ENCODE measurements at regions of chr3 and their contacts with region 1.

Region 1: DNA sequence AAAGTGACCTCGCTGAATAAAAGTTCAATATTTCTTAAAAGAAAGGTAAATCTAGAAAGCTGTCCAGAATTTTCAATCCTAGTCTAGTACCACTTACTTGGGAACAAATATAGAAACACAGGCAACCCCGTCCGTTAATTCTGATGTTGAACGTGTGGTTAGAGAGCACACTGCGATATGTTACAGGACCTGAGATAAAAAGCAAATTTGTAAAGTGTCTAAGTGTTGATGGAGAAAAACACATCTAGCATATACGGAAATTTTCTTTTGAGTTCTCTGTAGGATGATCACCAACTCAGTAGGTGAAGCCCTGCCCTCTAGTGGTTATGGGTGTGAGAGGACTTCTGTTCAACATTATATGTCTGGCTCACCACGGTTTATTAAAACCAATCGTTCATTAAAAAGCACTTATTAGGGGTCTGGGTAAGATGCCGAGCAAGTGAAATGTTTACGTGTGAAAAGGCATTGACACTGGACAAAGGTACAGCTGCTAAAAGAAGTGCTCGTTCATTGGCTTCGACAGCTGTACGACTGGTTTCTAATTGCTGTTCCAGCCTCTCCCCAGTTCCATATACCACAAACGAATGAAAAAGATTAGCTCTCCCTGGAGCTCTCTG is 1.0 kb upstream of the ATP2C1 start:
- DNase-seq: peak; percentile 80
- ATAC-seq: peak; percentile 74
- H3K4me3 ChIP-seq: peak overlapping the region; percentile 93
- H3K27ac ChIP-seq: peak overlapping the region; percentile 95
- H3K4me1 ChIP-seq: peaks cover 28% of the 10 kb centered on the region
- H3K27me3 ChIP-seq: no peaks in the 10 kb centered on the region
- CTCF ChIP-seq: peak; percentile 91

Region 2: GRCh38 chr3:130528120-130528519 is 364.7 kb before region 1 on chr3:
- CTCF ChIA-PET with region 1: no interaction called
- POLR2A ChIA-PET with region 1: interaction called, 20 read pairs
- in situ Hi-C with region 1: no loop called
- intact Hi-C with region 1: no loop called
- DNase-seq: no peak
- ATAC-seq: no peak
- H3K4me3 ChIP-seq: no peak overlapping the region
- H3K27ac ChIP-seq: no peak overlapping the region
- H3K4me1 ChIP-seq: no peaks in the 10 kb centered on the region
- H3K27me3 ChIP-seq: peaks cover 14% of the 10 kb centered on the region
- CTCF ChIP-seq: no peak

Region 3: DNA sequence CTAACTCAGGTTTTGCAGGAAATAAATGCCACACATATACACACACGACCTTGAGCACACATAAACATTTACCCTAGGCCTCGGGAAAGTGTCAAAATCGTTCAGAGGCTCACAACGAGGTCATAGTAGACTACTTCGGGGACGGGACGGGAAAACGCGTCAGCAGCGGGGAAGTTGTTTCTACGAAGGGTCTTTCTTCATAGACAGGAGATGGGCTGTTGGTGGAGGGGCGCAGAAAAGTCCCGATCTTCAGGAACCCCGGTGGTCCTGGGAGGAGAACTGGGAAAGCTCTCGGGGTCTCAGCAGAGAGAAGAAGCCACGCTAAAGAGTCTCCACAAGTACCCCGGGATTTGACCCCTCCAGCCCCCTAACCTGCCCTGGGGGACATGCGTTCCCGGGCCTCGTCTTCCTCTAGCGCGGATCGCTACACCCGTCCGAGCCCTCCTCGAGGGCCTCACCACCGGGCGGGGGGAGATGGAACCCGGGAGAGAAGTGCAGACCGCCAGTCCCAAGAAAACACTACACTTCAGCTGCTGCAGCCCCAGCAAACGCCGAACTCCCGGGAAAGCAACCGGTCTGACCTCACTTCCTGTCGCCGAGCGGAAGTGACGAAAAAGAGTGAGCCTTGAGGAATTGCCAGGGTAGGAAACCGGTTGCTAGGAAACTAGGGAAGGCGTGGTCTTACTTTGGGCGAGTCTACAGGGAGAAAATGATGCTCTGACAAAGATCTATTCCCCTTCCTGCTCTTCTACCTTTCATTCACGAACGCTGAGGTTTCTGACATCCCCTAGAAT is 146.4 kb before region 1 on chr3 and contains the start of gene PIK3R4:
- CTCF ChIA-PET with region 1: interaction called, 9 read pairs
- POLR2A ChIA-PET with region 1: interaction called, 10 read pairs
- in situ Hi-C with region 1: no loop called
- intact Hi-C with region 1: no loop called
- DNase-seq: peak; percentile 95
- ATAC-seq: peak; percentile 99
- H3K4me3 ChIP-seq: peak within 1 kb of the TSS; percentile 95
- H3K27ac ChIP-seq: peak within 1 kb of the TSS; percentile 89
- H3K4me1 ChIP-seq: peaks cover 24% of the 10 kb centered on the region
- H3K27me3 ChIP-seq: no peaks in the 10 kb centered on the region
- CTCF ChIP-seq: no peak
- total RNA-seq, gene PIK3R4: 26.1 TPM

Region 4: GRCh38 chr3:130759699-130760338 is 133.0 kb before region 1 on chr3:
- CTCF ChIA-PET with region 1: interaction called, 7 read pairs
- POLR2A ChIA-PET with region 1: no interaction called
- in situ Hi-C with region 1: no loop called
- intact Hi-C with region 1: loop called (anchors 1 kb)
- DNase-seq: peak; percentile 41
- ATAC-seq: peak; percentile 92
- H3K4me3 ChIP-seq: no peak overlapping the region
- H3K27ac ChIP-seq: no peak overlapping the region
- H3K4me1 ChIP-seq: no peaks in the 10 kb centered on the region
- H3K27me3 ChIP-seq: no peaks in the 10 kb centered on the region
- CTCF ChIP-seq: peak; percentile 86; the same call in 1 of the 2 replicates

Region 5: GRCh38 chr3:131329774-131330173 is 436.9 kb after region 1 on chr3:
- CTCF ChIA-PET with region 1: no interaction called
- POLR2A ChIA-PET with region 1: no interaction called
- in situ Hi-C with region 1: no loop called
- intact Hi-C with region 1: no loop called
- DNase-seq: no peak
- ATAC-seq: no peak
- H3K4me3 ChIP-seq: no peak overlapping the region
- H3K27ac ChIP-seq: no peak overlapping the region
- H3K4me1 ChIP-seq: peaks cover 6% of the 10 kb centered on the region; the same call in 1 of the 2 replicates
- H3K27me3 ChIP-seq: no peaks in the 10 kb centered on the region
- CTCF ChIP-seq: no peak

Measured in Panc1 (cell line).